Adrenal gland (tissue), 19 donors: ENCODE measurements at regions of chr9 and their contacts with region 1.

Region 1: GRCh38 chr9:134316449-134317160 is 9.7 kb upstream of the RXRA start:
- DNase-seq: peak in 3 of 7 donors; percentile 35 to 42 (median 41)
- H3K4me3 ChIP-seq: no peak overlapping the region
- H3K27ac ChIP-seq: no peak overlapping the region
- H3K4me1 ChIP-seq: no peaks in the 10 kb centered on the region
- H3K27me3 ChIP-seq: no peaks in the 10 kb centered on the region
- CTCF ChIP-seq: no peak
- POLR2A ChIP-seq: no peak

Region 2: GRCh38 chr9:134258828-134259546 is 57.6 kb before region 1 on chr9:
- intact Hi-C with region 1: loop called in 1 of 2 experiments (anchors 5 kb)
- DNase-seq: no peak
- H3K4me3 ChIP-seq: no peak overlapping the region
- H3K27ac ChIP-seq: no peak overlapping the region
- H3K4me1 ChIP-seq: peaks cover 0 to under 1% of the 10 kb centered on the region in 2 donors
- H3K27me3 ChIP-seq: peaks cover 1% of the 10 kb centered on the region
- CTCF ChIP-seq: no peak
- POLR2A ChIP-seq: no peak